ENCODE measurements at regions of chr7 and their contacts with region 1.

Region 1: DNA sequence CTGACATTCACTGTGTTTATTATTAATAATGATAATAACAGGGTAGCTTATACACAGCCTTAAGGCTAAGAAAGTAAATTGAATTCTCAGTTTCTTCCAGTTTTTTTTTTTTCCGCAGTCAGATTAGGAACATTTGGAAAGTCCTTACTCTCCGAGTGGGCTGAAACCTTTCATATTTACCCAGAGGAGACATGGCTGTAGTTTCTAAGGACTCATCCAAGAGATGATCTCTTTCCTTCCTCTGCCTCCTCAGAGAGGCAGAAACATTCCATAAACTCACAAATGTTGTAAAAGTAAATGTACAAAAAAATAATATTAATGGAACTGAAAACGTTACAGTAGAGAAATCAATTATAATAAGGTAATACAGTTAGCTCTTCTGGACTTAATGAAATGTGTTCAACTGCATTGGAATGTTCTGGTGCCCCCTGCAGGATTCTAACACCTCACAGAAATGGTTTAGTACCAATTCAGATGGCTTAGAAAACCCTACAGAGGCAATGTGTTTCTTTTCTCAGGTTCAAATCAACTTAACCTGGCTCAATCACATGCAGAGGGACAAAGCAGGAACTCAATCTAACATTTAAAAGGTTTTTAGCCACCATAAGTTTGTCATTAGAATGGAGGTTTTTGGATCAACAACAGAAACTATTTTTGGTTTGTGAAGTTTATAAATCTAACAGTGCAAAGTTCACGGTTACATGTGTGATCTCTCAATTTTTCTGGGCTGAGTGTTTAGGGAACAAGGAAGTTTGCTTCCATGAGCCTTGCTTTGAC is 71.7 kb downstream of the ICA1 start:
- DNase-seq: peak; percentile 36
- ATAC-seq: peak; percentile 65
- H3K4me3 Mint-ChIP-seq: no peak overlapping the region
- H3K27ac Mint-ChIP-seq: peak overlapping the region; percentile 69
- H3K4me1 Mint-ChIP-seq: peaks cover 34% of the 10 kb centered on the region
- H3K27me3 Mint-ChIP-seq: no peaks in the 10 kb centered on the region
- CTCF ChIP-seq: 0 out of 2 replicates have a peak, but pooled peaks have one; percentile 18

Region 2: GRCh38 chr7:8092140-8092539 is 98.2 kb before region 1 on chr7:
- CTCF ChIA-PET with region 1: no interaction called
- POLR2A ChIA-PET with region 1: no interaction called
- DNase-seq: no peak
- ATAC-seq: no peak
- H3K4me3 Mint-ChIP-seq: no peak overlapping the region
- H3K27ac Mint-ChIP-seq: no peak overlapping the region
- H3K4me1 Mint-ChIP-seq: peaks cover 3% of the 10 kb centered on the region; the same call in 1 of the 2 replicates
- H3K27me3 Mint-ChIP-seq: no peaks in the 10 kb centered on the region
- CTCF ChIP-seq: no peak

Region 3: GRCh38 chr7:8214244-8214824 is 24.0 kb after region 1 on chr7:
- CTCF ChIA-PET with region 1: interaction called, 12 read pairs
- POLR2A ChIA-PET with region 1: no interaction called
- DNase-seq: no peak
- ATAC-seq: no peak
- H3K4me3 Mint-ChIP-seq: no peak overlapping the region
- H3K27ac Mint-ChIP-seq: no peak overlapping the region
- H3K4me1 Mint-ChIP-seq: peaks cover 57% of the 10 kb centered on the region
- H3K27me3 Mint-ChIP-seq: no peaks in the 10 kb centered on the region
- CTCF ChIP-seq: no peak

Region 4: GRCh38 chr7:8249121-8249520 is 58.8 kb after region 1 on chr7:
- CTCF ChIA-PET with region 1: no interaction called
- POLR2A ChIA-PET with region 1: no interaction called
- DNase-seq: no peak
- ATAC-seq: no peak
- H3K4me3 Mint-ChIP-seq: no peak overlapping the region
- H3K27ac Mint-ChIP-seq: no peak overlapping the region; the same call in 1 of the 2 replicates
- H3K4me1 Mint-ChIP-seq: peaks cover 2% of the 10 kb centered on the region
- H3K27me3 Mint-ChIP-seq: no peaks in the 10 kb centered on the region
- CTCF ChIP-seq: no peak